Mammary epithelial cell (primary cell): ENCODE measurements at regions of chr16 and their contacts with region 1.

Region 1: DNA sequence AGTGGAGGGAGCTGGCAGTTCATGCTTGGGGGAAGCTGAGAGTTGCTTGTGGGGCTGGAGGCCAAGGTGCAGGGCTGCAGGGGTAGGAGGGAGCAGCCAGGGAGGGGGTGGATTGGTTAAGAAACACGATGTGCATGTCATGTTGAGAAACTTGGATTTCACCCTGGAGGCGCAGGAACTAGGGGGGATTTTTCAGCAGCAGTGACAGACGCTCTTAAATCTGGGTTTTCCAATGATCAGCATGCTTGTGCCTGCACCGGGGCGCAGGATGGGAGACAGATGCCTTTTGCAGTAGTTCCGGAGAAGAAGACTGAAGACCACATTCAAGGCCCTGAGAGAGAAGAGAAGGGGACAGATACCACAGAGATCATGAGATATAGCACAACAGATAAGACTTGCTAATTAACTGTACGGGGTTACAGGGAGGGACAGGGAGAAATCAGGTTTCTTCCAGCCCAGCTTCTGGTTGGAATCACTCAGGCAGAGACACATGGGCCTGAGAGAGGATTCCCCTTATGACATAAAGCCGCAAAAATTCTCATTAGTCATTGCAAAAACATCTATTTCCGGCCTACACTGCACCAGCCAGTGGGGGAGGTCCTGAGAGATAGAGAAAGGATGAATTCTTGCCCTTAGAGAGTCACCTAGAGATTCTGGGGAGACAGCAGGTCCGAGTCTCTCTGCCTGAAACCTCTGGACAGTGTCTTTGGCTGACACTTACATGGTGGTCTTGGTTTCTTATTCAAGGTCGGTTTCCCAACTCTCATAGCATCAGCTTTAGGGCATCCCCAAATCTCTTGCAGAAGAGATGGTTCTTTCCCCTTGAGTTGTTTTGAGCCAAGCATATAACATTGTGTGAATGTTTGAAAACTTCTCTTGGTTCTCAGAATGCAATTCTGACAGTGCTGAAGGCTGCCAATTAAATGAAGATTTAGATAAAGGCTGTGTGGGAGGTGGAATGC is 27.1 kb downstream of the CDH13 start:
- DNase-seq: peak; percentile 89
- H3K4me3 ChIP-seq: peak overlapping the region in 1 of 3 experiments; percentile 13
- H3K27ac ChIP-seq: peak overlapping the region; percentile 91
- H3K4me1 ChIP-seq: peaks cover 75% of the 10 kb centered on the region
- H3K27me3 ChIP-seq: no peaks in the 10 kb centered on the region
- CTCF ChIP-seq: no peak

Region 2: DNA sequence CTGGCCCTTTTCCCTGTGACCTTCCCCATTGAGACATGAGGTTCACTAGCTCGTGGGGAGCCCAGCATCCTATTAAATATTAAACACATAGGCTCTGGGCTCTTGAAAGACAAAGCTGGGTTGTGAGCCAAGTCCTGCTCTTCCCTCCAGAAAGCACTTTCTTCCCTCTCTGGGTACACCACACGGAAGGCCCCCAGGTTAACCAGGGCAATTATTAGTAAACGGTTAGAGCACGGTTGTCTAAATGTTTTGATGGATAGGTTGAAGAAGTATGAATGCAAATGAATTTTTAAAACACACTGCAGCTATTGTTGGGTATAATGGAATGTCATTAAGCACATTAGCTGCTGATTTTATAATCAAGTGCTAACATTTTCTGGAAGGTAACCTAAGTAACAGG is 59.7 kb before region 1 on chr16:
- CTCF ChIA-PET with region 1: no interaction called
- dilution Hi-C with region 1: no loop called
- in situ Hi-C with region 1: no loop called
- intact Hi-C with region 1: no loop called
- DNase-seq: no peak
- H3K4me3 ChIP-seq: no peak overlapping the region
- H3K27ac ChIP-seq: no peak overlapping the region
- H3K4me1 ChIP-seq: no peaks in the 10 kb centered on the region
- H3K27me3 ChIP-seq: no peaks in the 10 kb centered on the region
- CTCF ChIP-seq: no peak

Region 3: GRCh38 chr16:82621796-82622195 is 32.0 kb before region 1 on chr16:
- CTCF ChIA-PET with region 1: no interaction called
- dilution Hi-C with region 1: no loop called
- in situ Hi-C with region 1: no loop called
- intact Hi-C with region 1: no loop called
- DNase-seq: no peak
- H3K4me3 ChIP-seq: no peak overlapping the region
- H3K27ac ChIP-seq: no peak overlapping the region
- H3K4me1 ChIP-seq: peaks cover 4% of the 10 kb centered on the region
- H3K27me3 ChIP-seq: no peaks in the 10 kb centered on the region
- CTCF ChIP-seq: peak in 1 of 2 donors; percentile 25

Region 4: GRCh38 chr16:82633964-82634600 is 19.7 kb before region 1 on chr16:
- CTCF ChIA-PET with region 1: no interaction called
- dilution Hi-C with region 1: no loop called
- in situ Hi-C with region 1: no loop called
- intact Hi-C with region 1: loop called (anchors 1 kb)
- DNase-seq: peak; percentile 94
- H3K4me3 ChIP-seq: peak overlapping the region in 1 of 3 experiments; percentile 21
- H3K27ac ChIP-seq: peak overlapping the region; percentile 99
- H3K4me1 ChIP-seq: peaks cover 88% of the 10 kb centered on the region
- H3K27me3 ChIP-seq: no peaks in the 10 kb centered on the region
- CTCF ChIP-seq: no peak

Region 5: GRCh38 chr16:82694239-82694863 is 40.5 kb after region 1 on chr16:
- CTCF ChIA-PET with region 1: no interaction called
- dilution Hi-C with region 1: no loop called
- in situ Hi-C with region 1: no loop called
- intact Hi-C with region 1: loop called (anchors 5 kb)
- DNase-seq: peak; percentile 57
- H3K4me3 ChIP-seq: no peak overlapping the region
- H3K27ac ChIP-seq: no peak overlapping the region
- H3K4me1 ChIP-seq: peaks cover 12% of the 10 kb centered on the region
- H3K27me3 ChIP-seq: no peaks in the 10 kb centered on the region
- CTCF ChIP-seq: no peak

Region 6: GRCh38 chr16:82735673-82736091 is 81.9 kb after region 1 on chr16:
- CTCF ChIA-PET with region 1: no interaction called
- dilution Hi-C with region 1: no loop called
- in situ Hi-C with region 1: no loop called
- intact Hi-C with region 1: no loop called
- DNase-seq: no peak
- H3K4me3 ChIP-seq: no peak overlapping the region
- H3K27ac ChIP-seq: no peak overlapping the region
- H3K4me1 ChIP-seq: peaks cover 5% of the 10 kb centered on the region
- H3K27me3 ChIP-seq: no peaks in the 10 kb centered on the region
- CTCF ChIP-seq: no peak

Region 7: GRCh38 chr16:82963653-82964052 is 309.8 kb after region 1 on chr16:
- CTCF ChIA-PET with region 1: no interaction called
- dilution Hi-C with region 1: no loop called
- in situ Hi-C with region 1: no loop called
- intact Hi-C with region 1: no loop called
- DNase-seq: no peak
- H3K4me3 ChIP-seq: no peak overlapping the region
- H3K27ac ChIP-seq: no peak overlapping the region
- H3K4me1 ChIP-seq: no peaks in the 10 kb centered on the region
- H3K27me3 ChIP-seq: no peaks in the 10 kb centered on the region
- CTCF ChIP-seq: no peak